AG04449 (cell line): ENCODE measurements at regions of chr2 and their contacts with region 1.

Region 1: DNA sequence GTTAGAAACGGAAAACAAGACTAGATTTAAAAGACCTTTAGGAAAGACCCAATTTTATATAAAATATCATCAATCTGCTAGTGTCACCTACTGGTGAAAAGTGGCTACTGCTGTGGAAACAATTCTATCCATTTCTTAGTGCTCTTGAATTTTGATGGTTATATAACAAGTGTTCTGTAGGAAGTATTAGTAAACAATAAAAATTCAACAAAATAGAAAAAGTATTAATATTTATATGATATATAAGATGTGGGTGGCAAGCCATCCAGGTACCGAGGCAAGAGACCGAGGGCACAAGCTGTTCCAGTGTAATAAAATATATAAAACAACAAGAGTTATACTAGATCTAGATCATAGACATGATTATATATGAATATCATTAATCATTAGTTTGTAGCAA is 6.2 kb upstream of the TMEM87B start:
- DNase-seq: no peak
- H3K4me3 ChIP-seq: no peak overlapping the region
- CTCF ChIP-seq: peak; percentile 38

Region 2: GRCh38 chr2:111897924-111898702 is 150.8 kb before region 1 on chr2 and contains the start of gene MERTK:
- CTCF ChIA-PET with region 1: interaction called, 26 read pairs
- POLR2A ChIA-PET with region 1: no interaction called
- DNase-seq: no peak
- H3K4me3 ChIP-seq: peak within 1 kb of the TSS; percentile 61
- CTCF ChIP-seq: peak; percentile 45

Region 3: GRCh38 chr2:112032689-112033465 is 16.0 kb before region 1 on chr2:
- CTCF ChIA-PET with region 1: interaction called, 21 read pairs
- POLR2A ChIA-PET with region 1: no interaction called
- DNase-seq: no peak
- H3K4me3 ChIP-seq: no peak overlapping the region
- CTCF ChIP-seq: no peak

Region 4: DNA sequence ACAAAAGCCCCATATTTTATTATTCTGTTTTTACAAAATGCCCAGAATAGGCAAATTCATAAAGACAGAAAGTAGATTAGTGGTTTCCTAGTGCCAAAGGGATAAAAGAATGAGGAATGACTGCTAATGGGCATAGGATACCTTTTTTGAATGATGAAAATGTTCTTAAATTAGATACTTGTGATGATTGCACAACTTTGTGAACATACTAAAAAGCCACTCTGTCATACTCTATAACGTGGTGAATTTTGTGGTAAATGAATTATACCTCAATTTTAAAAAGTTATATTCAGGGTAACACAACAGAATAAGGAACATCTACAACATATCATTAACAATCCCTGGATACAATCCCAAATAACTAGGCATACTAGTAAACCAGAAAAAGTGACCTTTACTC is 80.2 kb after region 1 on chr2:
- CTCF ChIA-PET with region 1: no interaction called
- POLR2A ChIA-PET with region 1: no interaction called
- DNase-seq: no peak
- H3K4me3 ChIP-seq: no peak overlapping the region
- CTCF ChIP-seq: no peak